HCT116 (cell line): ENCODE measurements at regions of chr4 and their contacts with region 1.

Region 1: DNA sequence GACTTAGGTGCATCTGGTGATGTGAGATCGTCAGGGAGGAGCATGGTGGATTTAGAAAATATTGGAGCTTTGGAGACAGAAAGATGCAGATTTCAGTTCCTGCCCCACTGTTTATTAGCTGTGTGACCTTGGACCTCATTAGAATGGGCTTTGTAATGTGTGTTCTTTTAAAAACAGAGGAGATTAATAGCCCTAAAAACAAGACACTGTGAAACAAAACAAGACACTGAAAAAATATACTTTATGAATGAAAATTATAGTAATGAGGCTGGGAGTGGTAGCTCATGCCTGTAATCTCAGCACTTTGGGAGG is 79.5 kb downstream of the EVC start:
- DNase-seq: no peak
- ATAC-seq: no peak
- H3K4me3 ChIP-seq: no peak overlapping the region
- H3K27ac ChIP-seq: no peak overlapping the region
- H3K4me1 ChIP-seq: no peaks in the 10 kb centered on the region
- H3K27me3 ChIP-seq: peaks cover 8% of the 10 kb centered on the region; the same call in 1 of the 2 replicates
- CTCF ChIP-seq: no peak
- POLR2A ChIP-seq: no peak
- RAD21 ChIP-seq: no peak

Region 2: DNA sequence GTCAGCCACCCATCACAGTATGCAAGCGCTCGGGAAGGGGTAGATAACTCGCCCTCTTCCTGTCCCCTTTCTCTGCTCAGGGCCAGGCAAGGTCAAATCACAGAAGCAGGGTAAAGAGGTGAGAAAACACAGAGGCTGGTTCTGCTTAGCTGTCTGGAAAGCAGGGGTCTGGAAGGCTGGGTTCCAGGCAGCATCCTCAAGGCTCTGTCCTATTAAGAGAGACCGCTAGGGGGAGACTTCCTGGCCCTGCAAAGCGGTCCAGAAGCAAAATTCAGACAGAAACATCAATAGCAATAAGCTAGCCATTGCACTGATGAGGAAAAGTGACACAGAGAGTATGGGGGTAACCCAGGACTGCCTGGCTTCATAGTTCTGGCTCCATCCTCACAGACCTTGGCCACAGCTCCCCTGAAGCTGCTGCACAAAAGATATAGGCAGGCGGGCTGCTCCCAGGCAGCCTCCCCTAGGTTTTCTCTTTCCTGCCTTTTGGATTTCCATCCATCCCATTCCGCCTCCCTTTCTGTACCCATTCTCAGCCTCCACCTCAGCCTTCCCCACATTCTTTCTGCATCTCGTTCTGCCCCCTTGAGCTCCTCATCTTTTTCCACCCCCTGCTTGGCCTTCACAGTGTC is 390.6 kb before region 1 on chr4:
- CTCF ChIA-PET with region 1: interaction called, 10 read pairs
- POLR2A ChIA-PET with region 1: no interaction called
- RAD21 ChIA-PET with region 1: no interaction called
- intact Hi-C with region 1: loop called (anchors 1 kb)
- DNase-seq: peak; percentile 8
- ATAC-seq: peak; percentile 77
- H3K4me3 ChIP-seq: no peak overlapping the region
- H3K27ac ChIP-seq: no peak overlapping the region
- H3K4me1 ChIP-seq: no peaks in the 10 kb centered on the region
- H3K27me3 ChIP-seq: peaks cover 25% of the 10 kb centered on the region
- CTCF ChIP-seq: peak; percentile 47 to 85 (median 75); a peak in 5 of 6 replicates
- POLR2A ChIP-seq: no peak
- RAD21 ChIP-seq: peak; percentile 48

Region 3: DNA sequence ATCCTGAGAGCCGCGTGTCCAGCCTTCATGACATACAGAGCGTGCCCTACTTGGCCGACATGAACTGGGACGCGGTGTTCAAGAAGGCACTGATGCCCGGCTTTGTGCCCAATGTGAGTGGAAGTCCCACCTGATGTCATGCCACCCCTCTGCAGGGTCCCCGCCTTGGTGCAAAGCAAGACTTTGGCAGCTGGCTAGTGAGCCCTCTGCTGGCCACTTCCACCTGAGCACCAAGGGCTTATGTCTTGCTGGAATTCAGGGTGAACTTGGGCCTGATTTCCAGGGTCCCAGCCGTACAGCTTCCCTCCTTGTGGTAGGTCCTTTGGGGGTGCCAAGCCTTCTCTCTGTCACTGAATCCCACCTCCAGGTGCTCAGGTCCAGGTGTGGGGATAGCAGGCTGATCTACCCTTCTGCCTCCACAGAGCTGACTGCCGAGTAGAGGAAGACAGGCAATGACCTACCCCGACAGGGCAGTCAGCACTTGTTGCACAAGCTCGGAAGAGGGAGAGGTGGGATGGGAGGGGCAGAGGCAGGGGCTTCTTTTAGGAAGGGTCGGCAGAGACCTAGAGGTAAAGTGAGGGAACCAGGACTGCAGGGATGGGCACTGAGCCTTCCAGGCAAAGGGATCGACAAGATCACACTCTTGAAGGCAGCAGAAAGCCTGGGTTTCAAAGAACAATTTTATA is 330.2 kb before region 1 on chr4:
- CTCF ChIA-PET with region 1: no interaction called
- POLR2A ChIA-PET with region 1: no interaction called
- RAD21 ChIA-PET with region 1: no interaction called
- intact Hi-C with region 1: loop called (anchors 1 kb)
- DNase-seq: peak; percentile 4
- ATAC-seq: peak; percentile 80
- H3K4me3 ChIP-seq: no peak overlapping the region
- H3K27ac ChIP-seq: no peak overlapping the region
- H3K4me1 ChIP-seq: no peaks in the 10 kb centered on the region
- H3K27me3 ChIP-seq: peaks cover 29% of the 10 kb centered on the region; the same call in 1 of the 2 replicates
- CTCF ChIP-seq: peak; percentile 22 to 74 (median 72); a peak in 4 of 6 replicates
- POLR2A ChIP-seq: no peak
- RAD21 ChIP-seq: peak; percentile 48